A549 (cell line): ENCODE measurements at regions of chr1 and their contacts with region 1.

Region 1: GRCh38 chr1:145845514-145846161 is at the start of gene NUDT17:
- DNase-seq: peak; percentile 79 to 93
- ATAC-seq: peak; percentile 82 to 89
- H3K4me3 ChIP-seq: peak within 1 kb of the TSS; percentile 55
- H3K27ac ChIP-seq: peak within 1 kb of the TSS; percentile 82 to 95
- H3K4me1 ChIP-seq: peaks cover 4% of the 10 kb centered on the region; the same call in 1 of the 3 replicates
- CTCF ChIP-seq: peak; percentile 92
- EP300 ChIP-seq: no peak
- POLR2A ChIP-seq: peak; percentile 51
- RAD21 ChIP-seq: peak; percentile 57 to 66
- polyA plus RNA-seq, gene NUDT17: 6.7 and 9.0 TPM in 2 replicates

Region 2: DNA sequence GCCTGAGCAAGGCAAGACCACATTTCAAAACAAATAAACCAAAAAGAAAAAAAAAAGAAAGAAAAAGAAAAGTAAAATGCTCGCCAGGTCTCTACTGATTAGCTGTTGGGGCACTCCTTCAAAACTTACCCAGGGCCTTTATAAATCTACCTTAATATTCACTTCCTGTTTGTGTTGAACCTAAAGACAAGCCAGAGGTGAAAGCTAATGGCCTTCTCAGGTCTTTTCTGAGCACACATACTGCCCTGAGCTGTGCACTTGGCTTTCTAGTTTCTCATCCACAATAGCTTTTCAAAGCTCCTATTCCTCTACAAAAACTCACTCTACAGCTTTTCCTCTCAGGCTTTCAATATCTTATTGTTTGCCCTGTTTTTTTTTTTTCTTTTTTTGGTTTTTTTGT is 72.2 kb before region 1 on chr1:
- CTCF ChIA-PET with region 1: interaction called, 20 read pairs
- POLR2A ChIA-PET with region 1: no interaction called
- DNase-seq: no peak
- ATAC-seq: no peak
- H3K4me3 ChIP-seq: no peak overlapping the region
- H3K27ac ChIP-seq: 0 out of 6 replicates have a peak overlapping the region, but pooled peaks of 1 of the 2 experiments have one; percentile 27
- H3K4me1 ChIP-seq: peaks cover 19% of the 10 kb centered on the region
- CTCF ChIP-seq: no peak
- EP300 ChIP-seq: no peak
- POLR2A ChIP-seq: no peak
- RAD21 ChIP-seq: no peak

Region 3: DNA sequence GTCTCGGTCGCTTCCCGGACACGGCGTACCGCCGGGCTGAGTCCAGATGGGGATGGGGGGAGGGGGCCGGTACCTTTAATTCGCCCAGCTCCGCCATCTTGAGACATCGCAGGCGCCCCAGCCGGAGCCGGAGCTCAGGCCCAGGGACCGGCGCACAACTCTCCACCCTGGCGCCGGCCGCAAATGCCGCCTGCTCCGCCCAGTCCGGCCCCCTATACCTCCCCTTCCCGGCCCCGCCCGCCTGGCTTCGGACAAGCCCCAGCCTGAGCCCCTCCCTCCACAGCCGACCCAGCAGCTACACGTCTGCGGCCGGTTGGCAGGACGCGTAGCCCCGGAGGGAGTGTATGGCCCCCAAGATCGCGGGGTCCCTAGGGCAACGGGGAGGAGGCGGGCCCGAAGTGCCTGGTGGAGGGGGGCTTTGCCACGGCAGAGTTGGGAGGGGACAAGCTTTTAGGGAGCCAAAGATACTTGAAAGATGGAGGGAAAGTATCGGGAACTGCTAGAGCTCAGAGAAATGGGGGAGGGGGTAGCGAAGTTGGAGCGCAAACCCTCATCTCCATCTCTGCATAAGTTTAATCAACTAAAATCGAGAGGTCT is 13.4 kb after region 1 on chr1 and contains the start of gene PIAS3:
- CTCF ChIA-PET with region 1: interaction called, 185 read pairs
- POLR2A ChIA-PET with region 1: interaction called, 48 read pairs
- DNase-seq: peak; percentile 92 to 93
- ATAC-seq: peak; percentile 83 to 95
- H3K4me3 ChIP-seq: peak within 1 kb of the TSS; percentile 53
- H3K27ac ChIP-seq: peak within 1 kb of the TSS; percentile 92 to 99
- H3K4me1 ChIP-seq: peaks cover 10% of the 10 kb centered on the region; the same call in 2 of the 3 replicates
- CTCF ChIP-seq: no peak
- EP300 ChIP-seq: peak in 1 of 2 experiments; percentile 7; a peak in 1 of 5 replicates
- POLR2A ChIP-seq: peak; percentile 43
- RAD21 ChIP-seq: no peak
- polyA plus RNA-seq, gene PIAS3: 15.5 and 25.4 TPM in 2 replicates

Region 4: GRCh38 chr1:145879775-145880174 is 34.1 kb after region 1 on chr1:
- CTCF ChIA-PET with region 1: interaction called, 13 read pairs
- POLR2A ChIA-PET with region 1: no interaction called
- DNase-seq: no peak
- ATAC-seq: no peak
- H3K4me3 ChIP-seq: no peak overlapping the region
- H3K27ac ChIP-seq: no peak overlapping the region
- H3K4me1 ChIP-seq: peaks cover 10% of the 10 kb centered on the region; the same call in 1 of the 3 replicates
- CTCF ChIP-seq: no peak
- EP300 ChIP-seq: no peak
- POLR2A ChIP-seq: no peak
- RAD21 ChIP-seq: no peak

Region 5: DNA sequence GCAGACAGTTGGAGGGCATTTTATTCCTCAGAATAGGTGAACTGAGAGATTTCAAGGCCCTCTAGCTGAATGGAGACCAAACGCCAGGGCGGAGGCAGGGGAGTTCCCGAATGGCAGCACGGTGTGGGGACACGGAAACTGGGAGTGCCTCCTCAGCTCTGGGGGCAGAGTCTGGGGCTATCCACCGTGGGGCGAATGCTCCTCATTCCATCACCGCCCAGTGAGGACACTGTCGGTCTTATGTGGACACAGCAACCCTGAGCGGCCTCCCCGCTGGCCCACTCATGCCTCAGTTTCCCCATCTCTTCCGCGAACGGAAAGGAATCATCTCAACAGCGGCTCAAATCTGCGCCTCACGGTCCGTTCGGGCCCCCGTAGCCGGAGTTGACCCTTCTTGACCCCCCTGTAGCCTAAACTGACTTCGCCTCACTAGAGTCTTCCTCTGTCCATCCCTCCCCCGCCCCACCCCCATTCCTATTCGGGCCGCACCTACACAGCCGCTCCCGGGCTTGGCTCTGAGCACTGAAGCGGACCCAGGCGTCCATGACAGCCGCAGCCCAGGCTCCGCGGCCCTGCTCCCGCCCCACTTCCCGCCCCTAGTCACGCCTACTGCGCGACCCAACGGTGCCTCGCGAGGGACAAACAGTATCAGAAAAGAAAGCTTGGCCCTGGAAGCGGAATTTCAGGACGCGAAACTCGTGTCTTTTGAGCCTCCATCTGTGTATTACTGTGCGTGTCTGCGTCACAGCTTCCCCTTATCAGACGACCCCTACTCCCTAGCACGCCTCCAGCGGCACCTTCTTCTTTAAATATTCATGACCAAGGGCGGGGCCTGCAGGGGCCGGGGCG is 72.7 kb after region 1 on chr1 and contains the start of gene PEX11B:
- CTCF ChIA-PET with region 1: interaction called, 71 read pairs
- POLR2A ChIA-PET with region 1: no interaction called
- DNase-seq: peak; percentile 87 to 89
- ATAC-seq: peak; percentile 89 to 95
- H3K4me3 ChIP-seq: peak within 1 kb of the TSS; percentile 85
- H3K27ac ChIP-seq: peak within 1 kb of the TSS; percentile 85 to 92
- H3K4me1 ChIP-seq: peaks cover 10% of the 10 kb centered on the region
- CTCF ChIP-seq: no peak
- EP300 ChIP-seq: no peak
- POLR2A ChIP-seq: peak; percentile 45
- RAD21 ChIP-seq: no peak
- polyA plus RNA-seq, gene PEX11B: 35.5 and 40.6 TPM in 2 replicates

Region 6: DNA sequence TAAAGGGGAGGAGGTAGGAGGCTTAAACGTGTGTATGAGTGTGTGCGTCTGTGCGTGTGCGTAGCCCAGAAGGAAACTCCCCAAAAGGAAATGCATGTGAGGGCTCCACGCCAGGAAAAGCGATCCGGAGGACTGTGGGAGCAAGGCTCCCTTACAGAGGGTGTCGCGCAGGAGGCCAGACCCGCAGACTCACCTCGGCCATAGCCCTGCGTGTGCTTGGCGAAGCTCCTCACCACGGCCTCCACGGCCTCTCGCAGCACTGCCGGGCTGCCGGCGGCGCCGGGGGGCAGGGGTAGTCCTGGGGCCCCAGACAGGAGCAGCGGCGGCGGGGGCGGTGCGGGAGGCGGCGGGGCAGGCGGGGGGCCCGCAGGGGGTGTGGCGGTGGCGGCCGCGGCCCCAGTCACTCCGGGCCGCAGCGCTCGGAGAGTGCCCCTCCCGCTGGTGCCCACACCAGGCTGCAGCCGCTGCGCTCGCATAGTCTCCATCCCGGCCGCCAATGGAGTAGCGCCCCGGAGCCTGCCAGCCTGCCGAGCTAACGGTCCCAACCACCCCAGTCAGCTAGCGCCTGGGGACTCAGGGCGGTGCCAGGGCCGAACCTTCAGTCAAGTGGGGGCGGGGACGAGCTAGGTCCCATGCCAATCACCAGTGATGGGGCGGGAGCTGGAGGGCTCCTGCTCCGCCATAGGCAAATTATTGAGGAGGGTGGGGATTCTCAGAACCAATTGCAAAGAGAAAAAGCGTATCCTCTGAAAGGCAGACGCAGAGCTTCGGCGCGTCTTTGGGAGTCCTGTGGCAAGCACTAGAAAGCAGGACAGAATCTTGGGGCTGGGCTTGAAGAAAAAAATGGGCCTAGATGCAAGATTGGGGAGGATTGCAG is 112.0 kb after region 1 on chr1 and contains the start of gene LIX1L:
- CTCF ChIA-PET with region 1: interaction called, 11 read pairs
- POLR2A ChIA-PET with region 1: interaction called, 9 read pairs
- DNase-seq: peak; percentile 95 to 97
- ATAC-seq: peak; percentile 82 to 89
- H3K4me3 ChIP-seq: peak within 1 kb of the TSS; percentile 68
- H3K27ac ChIP-seq: peak within 1 kb of the TSS; percentile 91 to 97
- H3K4me1 ChIP-seq: peaks cover 42% of the 10 kb centered on the region
- CTCF ChIP-seq: no peak
- EP300 ChIP-seq: no peak
- POLR2A ChIP-seq: peak; percentile 66
- RAD21 ChIP-seq: no peak
- polyA plus RNA-seq, gene LIX1L: 33.0 and 35.8 TPM in 2 replicates

Region 7: DNA sequence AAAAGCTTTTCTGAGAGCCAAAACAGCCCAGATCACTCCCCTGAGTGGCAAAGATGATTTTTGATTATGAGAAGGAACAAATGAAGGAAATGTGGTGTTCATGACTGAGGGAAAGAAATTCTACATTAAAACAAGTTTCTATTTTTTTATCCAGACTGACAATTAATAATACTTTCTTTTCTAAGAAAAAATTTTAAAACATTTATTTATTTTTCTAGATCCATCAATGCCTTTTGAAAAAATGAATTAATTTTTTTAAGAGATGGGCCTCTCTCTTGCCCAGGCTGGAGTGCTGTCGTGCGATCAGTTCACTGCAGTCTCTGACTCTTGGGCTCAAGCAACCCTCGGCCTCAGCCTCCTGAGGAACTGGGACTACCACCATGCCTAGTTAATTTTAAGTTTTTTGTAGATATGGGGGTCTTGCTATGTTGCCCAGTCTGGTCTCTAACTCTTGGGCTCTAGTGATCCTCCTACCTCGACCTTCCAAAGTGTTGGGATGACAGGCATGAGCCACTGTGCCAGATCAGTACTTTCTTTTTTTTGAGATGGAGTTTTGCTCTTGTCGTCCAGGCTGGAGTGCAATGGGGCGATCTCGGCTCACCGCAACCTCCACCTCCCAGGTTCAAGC is 162.0 kb after region 1 on chr1:
- CTCF ChIA-PET with region 1: interaction called, 85 read pairs
- POLR2A ChIA-PET with region 1: no interaction called
- DNase-seq: no peak
- ATAC-seq: no peak
- H3K4me3 ChIP-seq: no peak overlapping the region
- H3K27ac ChIP-seq: no peak overlapping the region
- H3K4me1 ChIP-seq: peaks cover 3% of the 10 kb centered on the region; the same call in 1 of the 3 replicates
- CTCF ChIP-seq: peak; percentile 3; the same call in 1 of the 3 replicates
- EP300 ChIP-seq: no peak
- POLR2A ChIP-seq: no peak
- RAD21 ChIP-seq: no peak